ENCODE measurements at regions of chr9 and their contacts with region 1.

Region 1: DNA sequence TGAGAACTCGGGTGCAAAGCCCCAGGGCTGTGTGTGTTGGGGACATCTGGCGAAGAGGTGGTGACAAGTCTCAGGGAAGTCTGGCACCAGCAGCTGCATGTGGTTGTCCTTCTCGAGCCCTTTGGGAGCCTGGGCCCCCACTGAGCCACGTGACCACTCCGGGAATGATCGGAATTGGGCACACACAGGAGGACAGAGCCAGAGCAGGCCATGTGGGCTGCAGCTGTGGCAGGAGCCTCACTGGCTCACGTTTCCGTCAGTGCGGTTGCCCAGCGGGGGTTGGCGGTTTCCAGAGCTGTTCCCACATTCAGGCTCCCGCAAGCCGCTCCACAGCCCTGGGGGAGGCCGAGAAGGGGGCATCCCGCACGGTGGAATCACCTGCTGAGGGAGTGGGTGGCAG is 6.8 kb upstream of the CEL start:
- DNase-seq: peak; percentile 88
- ATAC-seq: peak; percentile 83

Region 2: DNA sequence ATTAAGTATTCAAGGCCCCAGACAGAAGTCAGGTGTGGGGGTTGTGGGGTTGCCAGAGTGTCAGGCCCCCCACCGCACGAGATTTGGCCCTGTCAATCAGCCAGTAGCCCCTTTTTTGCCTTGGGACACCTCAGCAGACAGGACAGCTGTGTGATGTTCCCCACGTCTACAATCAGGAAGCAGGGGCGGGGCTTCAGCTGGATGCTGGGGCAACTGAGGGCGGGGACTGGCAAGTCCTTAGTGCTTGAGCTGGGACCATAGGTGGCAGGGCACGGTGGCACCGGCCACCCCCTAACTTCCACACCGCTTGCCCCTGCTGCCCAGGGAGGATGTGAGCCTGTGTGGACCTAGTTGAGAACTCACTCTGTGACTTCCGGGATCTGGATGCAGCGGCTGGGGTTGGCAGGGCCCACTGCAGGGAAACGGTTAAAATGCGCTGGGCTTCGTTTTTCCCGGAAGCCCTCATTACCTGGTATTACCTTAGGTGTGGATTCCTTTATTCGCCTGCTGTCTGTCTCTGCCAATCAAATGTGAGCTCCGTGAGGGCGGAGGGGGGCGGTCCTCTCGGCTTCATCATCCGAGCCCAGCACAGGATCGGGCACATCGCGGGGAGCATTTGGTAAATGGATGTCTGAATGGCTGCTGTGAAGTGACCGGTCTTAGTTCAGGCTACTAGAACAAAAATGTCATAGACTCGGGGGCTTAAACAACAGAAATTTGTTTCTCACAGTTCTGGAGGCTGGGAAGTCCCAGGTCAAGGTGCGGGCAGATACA is 31.7 kb before region 1 on chr9:
- intact Hi-C with region 1: no loop called
- DNase-seq: no peak
- ATAC-seq: no peak

Region 3: DNA sequence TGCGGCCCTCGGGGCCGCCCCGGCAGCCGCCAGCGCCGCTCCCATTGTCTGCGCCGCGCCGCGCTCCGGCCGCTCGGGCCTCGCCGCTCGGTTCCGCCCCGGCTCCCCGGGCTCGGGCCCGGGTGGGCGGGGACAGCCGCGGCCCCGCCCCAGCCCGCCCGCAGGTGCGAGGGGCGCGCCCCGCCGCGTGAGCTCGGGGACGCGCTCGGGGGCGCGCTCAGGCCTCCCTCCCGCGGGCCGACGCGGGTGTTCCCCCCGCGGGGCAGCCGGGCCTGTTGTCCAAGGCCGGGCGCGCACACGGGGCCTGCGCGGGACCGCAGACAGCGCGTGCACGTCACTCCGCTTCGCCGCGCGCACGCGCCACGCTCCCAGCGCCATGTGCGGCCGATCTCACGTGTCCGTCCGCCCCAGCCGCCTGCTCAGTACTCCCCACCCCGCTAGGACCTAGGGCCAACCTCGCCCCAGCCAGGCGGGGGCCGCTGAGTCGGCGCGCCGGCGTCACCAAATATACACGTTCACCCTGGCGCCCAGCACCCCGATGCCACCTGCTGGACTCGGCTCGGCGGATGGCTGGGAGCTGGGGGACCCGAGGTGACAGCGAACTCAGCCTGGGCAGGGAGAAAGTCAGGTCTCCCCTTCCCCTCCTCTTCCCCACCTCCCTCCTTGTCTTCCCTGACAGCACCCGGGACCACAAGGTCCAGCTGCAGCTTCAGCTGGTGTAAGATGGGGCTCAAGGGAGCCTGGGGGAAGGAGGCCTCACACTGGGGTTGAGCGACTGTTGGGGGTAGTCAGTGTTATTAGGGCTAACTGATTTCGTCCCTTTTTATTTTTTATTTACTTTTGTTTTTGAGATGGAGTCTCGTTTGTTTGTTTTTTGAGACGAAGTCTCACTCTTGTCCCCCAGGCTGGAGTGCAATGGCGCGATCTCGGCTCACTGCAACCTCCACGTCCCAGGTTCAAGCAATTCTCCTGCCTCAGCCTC is 94.5 kb after region 1 on chr9:
- intact Hi-C with region 1: loop called (anchors 5 kb)
- DNase-seq: peak; percentile 94
- ATAC-seq: peak; percentile 81